Activated CD8-positive, alpha-beta T cell treated with anti-CD3 and anti-CD28 coated beads, Interleukin-2, amount 10 ng/mL, durations not matched to agents 7 days and 5 days (primary cell): ENCODE measurements at regions of chr9 and their contacts with region 1.

Region 1: DNA sequence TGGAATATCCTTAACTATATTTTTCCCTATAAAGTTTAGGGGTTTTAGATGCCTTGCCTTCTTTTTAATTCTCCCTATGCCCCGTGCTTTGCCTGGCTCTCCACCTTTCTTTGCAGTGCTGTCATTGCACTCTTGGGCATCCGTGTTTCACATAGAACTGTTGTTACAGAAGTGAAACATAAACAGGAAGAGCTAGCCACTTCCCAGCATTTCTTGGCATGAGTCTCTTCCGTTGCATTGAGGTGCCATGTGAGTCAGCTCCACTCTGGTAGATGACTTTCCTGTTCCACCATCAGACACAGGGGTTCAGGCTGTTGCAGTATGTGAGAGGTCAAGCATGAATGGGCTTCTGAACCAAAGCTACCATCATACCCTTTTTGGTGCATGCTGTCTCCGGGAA is 73.4 kb downstream of the ANGPTL2 start:
- DNase-seq: peak; percentile 48
- ATAC-seq: peak; percentile 73
- H3K4me3 Mint-ChIP-seq: peak overlapping the region; percentile 13
- H3K27ac Mint-ChIP-seq: peak overlapping the region; percentile 51
- H3K4me1 Mint-ChIP-seq: peaks cover 33% of the 10 kb centered on the region
- H3K27me3 Mint-ChIP-seq: peaks cover 7% of the 10 kb centered on the region

Region 2: DNA sequence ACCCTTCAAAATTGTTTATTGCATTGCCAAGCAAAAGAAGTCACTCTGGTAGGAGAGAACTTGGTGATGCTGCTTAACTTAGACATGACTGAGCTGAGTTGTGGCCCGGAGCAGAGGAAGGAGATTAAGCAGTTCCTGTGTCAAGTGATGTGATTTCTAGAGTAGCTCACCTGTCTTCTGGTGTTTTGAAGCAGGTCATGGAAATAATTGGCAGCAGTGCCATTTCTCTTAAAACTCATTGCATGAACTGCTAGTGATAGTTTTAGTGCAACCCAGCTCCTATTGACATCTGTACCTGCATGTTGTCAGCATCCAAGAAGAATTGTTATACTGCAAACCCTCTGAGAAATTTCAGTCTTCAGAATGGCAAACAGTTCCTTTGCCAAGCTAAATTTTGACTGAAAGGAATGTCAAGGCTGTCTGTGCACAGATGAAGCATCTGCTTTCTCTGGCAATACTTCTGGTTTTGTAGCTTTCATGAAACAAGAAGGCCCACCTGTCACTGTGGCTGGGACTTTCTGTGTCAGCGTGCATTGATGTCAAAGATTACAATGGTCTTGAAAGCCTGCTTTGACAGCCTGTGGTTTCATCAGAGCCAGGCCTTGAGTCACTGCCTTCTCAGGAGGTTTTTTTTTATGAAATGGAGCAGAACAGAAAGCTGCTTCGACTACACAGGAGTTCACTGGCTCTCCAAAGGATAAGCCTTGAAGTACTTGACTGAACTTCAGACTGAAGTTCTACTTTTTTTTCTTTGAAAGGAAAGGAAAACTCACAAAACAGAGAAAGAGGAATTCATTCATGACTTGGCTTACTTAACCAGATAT is 43.9 kb before region 1 on chr9:
- CTCF ChIA-PET with region 1: interaction called, 10 read pairs
- POLR2A ChIA-PET with region 1: interaction called, 4 read pairs
- DNase-seq: peak; percentile 83
- ATAC-seq: peak; percentile 98
- H3K4me3 Mint-ChIP-seq: peak overlapping the region; percentile 30
- H3K27ac Mint-ChIP-seq: peak overlapping the region; percentile 76
- H3K4me1 Mint-ChIP-seq: peaks cover 30% of the 10 kb centered on the region
- H3K27me3 Mint-ChIP-seq: peaks cover 4% of the 10 kb centered on the region

Region 3: DNA sequence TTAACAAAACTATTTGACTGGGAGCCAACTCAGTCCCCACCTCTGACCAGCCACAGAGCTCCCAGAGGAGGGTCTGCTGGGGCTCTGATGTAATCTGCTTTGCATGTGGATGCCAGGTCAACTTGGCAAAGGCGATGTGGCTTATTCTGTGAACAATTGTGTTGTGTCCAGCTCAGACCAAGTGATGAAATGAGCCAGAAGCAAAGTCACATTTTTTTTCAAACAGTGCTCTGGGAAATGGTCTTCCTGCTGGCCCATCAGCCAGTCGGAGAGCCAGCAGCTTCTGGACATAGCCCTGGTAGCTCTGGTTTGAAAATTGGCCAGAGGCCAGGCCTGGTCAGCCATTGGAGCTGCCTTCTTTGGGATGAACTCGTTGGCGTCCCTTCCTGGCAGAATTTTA is 13.1 kb before region 1 on chr9:
- CTCF ChIA-PET with region 1: interaction called, 15 read pairs
- POLR2A ChIA-PET with region 1: no interaction called
- DNase-seq: no peak
- ATAC-seq: no peak
- H3K4me3 Mint-ChIP-seq: no peak overlapping the region
- H3K27ac Mint-ChIP-seq: no peak overlapping the region
- H3K4me1 Mint-ChIP-seq: no peaks in the 10 kb centered on the region
- H3K27me3 Mint-ChIP-seq: peaks cover 7% of the 10 kb centered on the region